ENCODE measurements at regions of chr5 and their contacts with region 1.

Region 1: DNA sequence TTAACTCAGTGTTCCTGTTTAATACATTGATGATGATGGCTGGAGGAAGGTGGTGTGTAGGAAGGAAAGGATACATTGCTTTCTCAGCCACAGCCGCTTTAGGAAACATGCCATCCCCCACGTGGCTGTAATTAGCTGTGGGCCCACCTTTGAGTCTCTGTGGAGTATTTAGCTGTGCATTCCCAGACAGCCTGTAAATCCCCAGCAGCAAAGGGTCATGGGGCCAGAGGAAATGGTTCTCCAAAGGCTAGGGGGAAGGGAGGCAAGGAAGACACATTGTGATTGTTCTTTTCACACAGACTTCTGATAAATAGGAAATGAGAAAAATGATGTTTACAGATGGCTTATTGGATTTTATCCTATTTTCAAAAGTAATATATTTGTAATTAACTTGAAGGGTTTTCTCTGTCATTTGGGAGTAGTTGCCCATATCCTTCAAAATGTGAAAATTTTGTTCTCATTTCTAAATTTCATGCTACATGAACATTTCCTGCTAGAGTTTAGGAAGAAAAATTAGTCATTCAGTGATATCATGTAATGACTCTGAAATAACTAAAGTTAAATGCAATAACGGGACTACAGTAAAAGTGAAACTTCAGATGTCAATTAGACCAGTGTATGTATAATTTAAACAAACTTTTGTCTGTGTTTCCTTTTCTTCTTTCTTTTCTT is 24.3 kb upstream of the F2R start:
- DNase-seq: peak; percentile 98
- H3K4me3 ChIP-seq: no peak overlapping the region
- H3K27ac ChIP-seq: peak overlapping the region; percentile 91
- H3K4me1 ChIP-seq: peaks cover 79% of the 10 kb centered on the region
- H3K27me3 ChIP-seq: no peaks in the 10 kb centered on the region
- CTCF ChIP-seq: no peak
- POLR2A ChIP-seq: peak; percentile 43

Region 2: GRCh38 chr5:76571559-76571958 is 120.0 kb before region 1 on chr5:
- CTCF ChIA-PET with region 1: no interaction called
- POLR2A ChIA-PET with region 1: no interaction called
- dilution Hi-C with region 1: no loop called
- intact Hi-C with region 1: no loop called
- DNase-seq: no peak
- H3K4me3 ChIP-seq: no peak overlapping the region
- H3K27ac ChIP-seq: no peak overlapping the region
- H3K4me1 ChIP-seq: no peaks in the 10 kb centered on the region
- H3K27me3 ChIP-seq: peaks cover 2 to 6% of the 10 kb centered on the region in 2 experiments
- CTCF ChIP-seq: no peak
- POLR2A ChIP-seq: no peak

Region 3: GRCh38 chr5:76660360-76660759 is 31.2 kb before region 1 on chr5:
- CTCF ChIA-PET with region 1: interaction called, 3 read pairs
- POLR2A ChIA-PET with region 1: no interaction called
- dilution Hi-C with region 1: no loop called
- intact Hi-C with region 1: loop called (anchors 2 kb)
- DNase-seq: peak; percentile 65
- H3K4me3 ChIP-seq: peak overlapping the region in 1 of 3 experiments; percentile 5
- H3K27ac ChIP-seq: peak overlapping the region; percentile 6
- H3K4me1 ChIP-seq: peaks cover 44% of the 10 kb centered on the region
- H3K27me3 ChIP-seq: no peaks in the 10 kb centered on the region
- CTCF ChIP-seq: no peak
- POLR2A ChIP-seq: no peak

Region 4: GRCh38 chr5:76736679-76737556 is 45.3 kb after region 1 on chr5:
- CTCF ChIA-PET with region 1: interaction called, 3 read pairs
- POLR2A ChIA-PET with region 1: no interaction called
- dilution Hi-C with region 1: no loop called
- intact Hi-C with region 1: loop called (anchors 1 kb)
- DNase-seq: peak; percentile 40
- H3K4me3 ChIP-seq: no peak overlapping the region
- H3K27ac ChIP-seq: peak overlapping the region; percentile 40
- H3K4me1 ChIP-seq: peaks cover 23% of the 10 kb centered on the region
- H3K27me3 ChIP-seq: no peaks in the 10 kb centered on the region
- CTCF ChIP-seq: no peak
- POLR2A ChIP-seq: peak; percentile 52

Region 5: GRCh38 chr5:76818844-76819831 is 127.5 kb after region 1 on chr5 and contains the start of gene F2RL1:
- CTCF ChIA-PET with region 1: no interaction called
- POLR2A ChIA-PET with region 1: interaction called, 3 read pairs
- dilution Hi-C with region 1: loop called (anchors 25 kb)
- intact Hi-C with region 1: no loop called
- DNase-seq: peak; percentile 61
- H3K4me3 ChIP-seq: peak within 1 kb of the TSS; percentile 68 to 82 (median 80)
- H3K27ac ChIP-seq: peak within 1 kb of the TSS; percentile 75
- H3K4me1 ChIP-seq: peaks cover 21% of the 10 kb centered on the region
- H3K27me3 ChIP-seq: no peaks in the 10 kb centered on the region
- CTCF ChIP-seq: no peak
- POLR2A ChIP-seq: no peak
- total RNA-seq, gene F2RL1: 21.9 and 42.6 TPM in 2 replicates

Measured in endothelial cell of umbilical vein (primary cell).